AG04449 (cell line): ENCODE measurements at regions of chr13 and their contacts with region 1.

Region 1: DNA sequence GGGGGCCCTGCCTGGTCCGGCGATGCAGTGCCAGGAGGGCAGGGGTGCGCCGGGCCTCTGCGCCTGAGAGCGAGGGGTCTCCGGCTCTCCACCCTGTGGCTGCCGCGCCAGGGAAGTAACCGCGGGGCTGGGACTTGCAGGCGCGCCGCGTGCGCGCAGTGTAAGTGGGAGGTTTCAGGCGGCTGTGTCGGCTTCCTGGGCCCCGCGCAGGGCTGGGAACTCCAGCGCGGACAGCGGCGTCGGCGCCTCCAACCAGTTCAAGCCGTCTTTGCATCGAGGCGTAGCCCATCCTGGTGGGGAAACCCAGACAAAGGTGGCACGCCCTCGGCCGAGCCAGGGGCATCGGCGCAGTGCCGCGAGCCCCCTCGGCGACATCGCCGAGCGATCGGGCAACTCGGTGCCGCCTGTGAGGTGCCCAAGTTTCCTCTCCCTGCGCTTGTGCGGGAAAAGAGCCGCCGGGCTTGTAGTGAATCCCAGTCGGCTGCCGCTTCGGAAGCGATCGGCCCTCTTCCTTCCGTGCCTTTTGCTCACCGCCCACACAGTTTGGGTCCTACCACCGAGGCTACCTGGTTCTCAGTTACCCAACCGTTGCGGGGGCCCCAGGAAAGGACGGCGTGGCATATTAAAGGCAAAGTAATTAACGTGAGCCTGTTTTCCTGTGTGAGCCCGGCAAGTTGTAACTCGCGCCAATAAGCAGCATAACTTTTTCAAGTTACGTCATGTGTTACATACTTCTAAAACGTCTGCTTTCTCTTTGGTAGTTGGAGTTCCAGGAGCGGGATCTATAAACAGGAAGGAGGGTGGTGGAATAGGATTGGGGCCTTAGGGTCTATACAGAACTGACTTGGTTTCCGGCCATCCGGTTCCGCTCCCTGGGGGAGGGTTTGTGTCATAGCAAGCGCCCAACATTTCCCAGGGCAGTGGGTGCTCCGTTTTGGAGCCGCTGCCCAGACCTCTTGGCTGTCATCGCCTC is 1.2 kb downstream of the LRCH1 start:
- DNase-seq: no peak
- H3K4me3 ChIP-seq: peak overlapping the region; percentile 89
- CTCF ChIP-seq: peak; percentile 34

Region 2: GRCh38 chr13:46535829-46536228 is 18.3 kb before region 1 on chr13:
- CTCF ChIA-PET with region 1: interaction called, 38 read pairs
- POLR2A ChIA-PET with region 1: no interaction called
- DNase-seq: no peak
- H3K4me3 ChIP-seq: no peak overlapping the region
- CTCF ChIP-seq: no peak

Region 3: GRCh38 chr13:46571189-46571908 is 17.2 kb after region 1 on chr13:
- CTCF ChIA-PET with region 1: interaction called, 26 read pairs
- POLR2A ChIA-PET with region 1: no interaction called
- DNase-seq: no peak
- H3K4me3 ChIP-seq: no peak overlapping the region
- CTCF ChIP-seq: no peak

Region 4: GRCh38 chr13:46587807-46588418 is 33.7 kb after region 1 on chr13:
- CTCF ChIA-PET with region 1: interaction called, 10 read pairs
- POLR2A ChIA-PET with region 1: no interaction called
- DNase-seq: no peak
- H3K4me3 ChIP-seq: no peak overlapping the region
- CTCF ChIP-seq: no peak

Region 5: DNA sequence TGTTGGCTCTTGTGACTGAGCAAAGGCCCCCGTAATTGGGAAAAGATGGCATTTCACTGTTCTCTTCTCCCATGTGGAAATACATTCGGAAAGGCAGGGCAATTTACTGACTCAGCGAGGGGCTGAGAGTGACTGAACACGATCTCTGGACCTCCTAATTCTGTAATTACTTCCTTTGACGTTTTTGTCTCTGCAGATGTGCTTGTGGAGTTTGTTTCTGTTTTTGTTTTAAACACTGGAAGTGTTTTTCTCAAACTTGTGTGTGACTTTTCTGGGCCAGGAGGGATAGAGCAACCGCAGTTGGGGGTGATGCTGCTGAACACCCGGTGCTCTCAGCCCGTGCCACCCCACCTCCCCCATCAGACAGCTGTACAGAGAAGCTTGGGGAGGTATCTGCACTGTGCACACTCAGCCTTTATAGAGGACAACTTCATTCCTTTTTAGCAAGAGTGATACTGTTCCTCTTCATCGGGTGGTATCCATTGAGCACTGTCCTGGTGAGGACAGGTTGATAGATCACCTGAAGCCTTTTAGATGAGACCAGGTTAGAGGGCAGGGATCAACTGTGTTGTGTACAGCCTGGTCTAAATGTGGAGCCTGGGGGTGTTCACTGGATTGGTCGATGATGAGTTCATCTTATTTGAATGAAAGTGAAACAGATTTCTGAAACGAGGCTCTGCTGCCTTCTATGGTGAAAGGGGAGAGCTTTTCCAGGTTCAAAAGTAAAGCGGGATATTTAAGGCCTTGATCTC is 125.4 kb after region 1 on chr13:
- CTCF ChIA-PET with region 1: interaction called, 21 read pairs
- POLR2A ChIA-PET with region 1: no interaction called
- DNase-seq: no peak
- H3K4me3 ChIP-seq: peak overlapping the region; percentile 60
- CTCF ChIP-seq: peak; percentile 25

Region 6: DNA sequence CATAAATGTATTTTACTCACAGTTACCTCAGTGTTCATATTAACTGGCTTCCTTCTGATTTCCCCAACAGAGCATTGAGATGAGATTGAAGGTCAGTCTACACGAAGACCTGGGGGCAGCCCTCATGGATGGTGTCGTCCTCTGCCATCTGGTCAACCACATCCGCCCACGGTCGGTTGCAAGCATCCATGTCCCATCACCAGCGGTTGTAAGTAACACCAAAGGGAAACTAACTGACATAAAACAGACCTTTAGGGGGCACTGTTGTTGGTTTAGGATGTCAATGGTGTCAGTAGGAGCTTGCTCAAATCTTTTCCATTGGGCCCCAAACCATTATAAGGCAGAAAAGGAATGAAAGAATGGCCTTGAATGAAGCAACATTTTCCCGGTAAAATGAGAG is 174.6 kb after region 1 on chr13:
- CTCF ChIA-PET with region 1: interaction called, 188 read pairs
- POLR2A ChIA-PET with region 1: no interaction called
- DNase-seq: no peak
- H3K4me3 ChIP-seq: no peak overlapping the region
- CTCF ChIP-seq: no peak

Region 7: DNA sequence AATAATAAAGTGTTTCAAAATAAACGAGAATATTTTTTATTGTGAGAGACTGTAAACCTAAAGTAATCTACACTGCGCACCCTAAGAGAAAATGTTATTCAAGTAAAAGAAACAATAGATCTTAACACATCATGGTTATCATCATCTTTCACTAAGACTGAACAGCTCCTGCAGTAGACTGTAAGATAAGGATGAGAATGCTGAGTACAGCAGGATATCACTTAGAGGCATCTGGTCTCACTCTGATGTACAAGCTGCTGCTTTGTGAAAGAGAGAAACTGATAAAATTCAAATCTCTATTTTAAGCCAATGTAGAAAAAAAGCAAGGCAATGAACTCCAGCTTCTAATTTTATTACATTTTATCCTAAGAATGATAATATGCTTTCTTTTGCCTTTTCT is 604.4 kb after region 1 on chr13:
- CTCF ChIA-PET with region 1: no interaction called
- POLR2A ChIA-PET with region 1: no interaction called
- DNase-seq: no peak
- H3K4me3 ChIP-seq: no peak overlapping the region
- CTCF ChIP-seq: no peak